Mammary epithelial cell (primary cell): ENCODE measurements at regions of chr11 and their contacts with region 1.

Region 1: DNA sequence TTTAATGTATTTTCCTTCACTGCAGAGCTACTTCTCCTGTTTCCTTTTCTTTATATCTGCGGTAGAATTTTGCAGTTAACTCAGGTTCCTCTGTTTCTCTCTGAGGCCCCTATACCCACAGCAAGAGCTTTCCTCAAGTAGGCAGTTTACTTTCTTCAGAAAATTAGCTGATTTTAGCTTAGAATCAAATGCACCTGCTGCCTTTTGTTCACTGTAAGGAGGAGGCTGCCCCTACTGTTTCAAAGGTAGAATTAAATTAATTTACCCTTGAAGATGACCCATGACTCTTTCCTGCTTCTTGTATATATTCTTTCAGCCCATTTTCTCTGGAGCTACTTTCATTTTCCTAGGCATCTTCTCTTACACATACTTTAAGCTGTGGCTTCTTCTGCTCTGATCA is 68.7 kb upstream of the GDPD4 start:
- DNase-seq: no peak
- H3K4me3 ChIP-seq: no peak overlapping the region
- H3K27ac ChIP-seq: no peak overlapping the region
- H3K4me1 ChIP-seq: peaks cover 16% of the 10 kb centered on the region
- H3K27me3 ChIP-seq: no peaks in the 10 kb centered on the region
- CTCF ChIP-seq: no peak

Region 2: DNA sequence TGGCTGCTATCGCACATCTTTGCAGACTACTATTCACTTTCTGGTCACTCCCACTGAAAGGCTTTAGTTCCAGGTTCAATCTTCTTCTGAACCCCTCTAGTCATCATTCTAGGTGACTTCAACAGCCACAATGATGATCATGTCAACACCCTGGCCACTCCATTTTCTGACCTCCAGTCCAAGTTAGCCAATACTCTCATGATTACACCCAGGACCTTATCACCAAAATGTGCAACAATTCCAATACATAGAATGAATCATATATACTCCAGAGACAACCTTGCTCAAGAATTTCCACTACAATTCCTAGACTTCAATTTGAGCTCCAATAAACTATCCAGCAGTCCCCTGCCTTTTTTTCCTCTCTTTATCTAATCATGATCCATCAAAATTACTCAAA is 33.0 kb after region 1 on chr11:
- CTCF ChIA-PET with region 1: interaction called, 14 read pairs
- dilution Hi-C with region 1: no loop called
- in situ Hi-C with region 1: no loop called
- intact Hi-C with region 1: no loop called
- DNase-seq: no peak
- H3K4me3 ChIP-seq: no peak overlapping the region
- H3K27ac ChIP-seq: no peak overlapping the region
- H3K4me1 ChIP-seq: peaks cover 55% of the 10 kb centered on the region
- H3K27me3 ChIP-seq: no peaks in the 10 kb centered on the region
- CTCF ChIP-seq: no peak